T-cell (primary cell): ENCODE measurements at regions of chr4 and their contacts with region 1.

Region 1: GRCh38 chr4:184721254-184721653 is 12.6 kb downstream of the CENPU start:
- DNase-seq: no peak
- ATAC-seq: no peak
- H3K4me3 ChIP-seq: no peak overlapping the region
- H3K4me3 Mint-ChIP-seq: no peak overlapping the region
- H3K27ac ChIP-seq: no peak overlapping the region
- H3K27ac Mint-ChIP-seq: no peak overlapping the region
- H3K4me1 ChIP-seq: no peaks in the 10 kb centered on the region
- H3K4me1 Mint-ChIP-seq: peaks cover 0 to 2% (median 0%) of the 10 kb centered on the region in 3 donors
- H3K27me3 ChIP-seq: no peaks in the 10 kb centered on the region
- H3K27me3 Mint-ChIP-seq: no peaks in the 10 kb centered on the region

Region 2: DNA sequence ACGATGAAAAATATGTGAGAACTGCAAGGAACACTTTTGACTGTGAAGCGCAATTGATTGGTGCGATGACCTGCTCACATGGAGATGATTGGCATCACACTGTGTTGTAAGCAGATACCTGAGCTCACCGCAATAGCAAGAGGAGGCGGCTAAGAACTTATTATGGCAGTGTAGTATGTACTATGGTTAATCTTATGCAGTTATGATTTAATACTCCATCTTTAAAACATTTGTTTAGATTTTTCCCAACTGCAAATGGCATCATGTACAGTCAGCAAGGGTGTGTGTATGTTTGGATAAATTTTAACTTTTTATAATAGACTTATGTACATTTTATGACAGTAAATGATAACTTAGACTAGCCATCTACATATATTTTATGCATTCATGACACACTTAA is 46.2 kb before region 1 on chr4:
- CTCF ChIA-PET with region 1: no interaction called
- POLR2A ChIA-PET with region 1: interaction called in 1 of 2 experiments, 10 read pairs
- DNase-seq: no peak
- ATAC-seq: no peak
- H3K4me3 ChIP-seq: no peak overlapping the region
- H3K4me3 Mint-ChIP-seq: no peak overlapping the region
- H3K27ac ChIP-seq: no peak overlapping the region
- H3K27ac Mint-ChIP-seq: no peak overlapping the region
- H3K4me1 ChIP-seq: no peaks in the 10 kb centered on the region
- H3K4me1 Mint-ChIP-seq: peaks cover 0 to 3% (median 2%) of the 10 kb centered on the region in 3 donors
- H3K27me3 ChIP-seq: no peaks in the 10 kb centered on the region
- H3K27me3 Mint-ChIP-seq: no peaks in the 10 kb centered on the region

Region 3: DNA sequence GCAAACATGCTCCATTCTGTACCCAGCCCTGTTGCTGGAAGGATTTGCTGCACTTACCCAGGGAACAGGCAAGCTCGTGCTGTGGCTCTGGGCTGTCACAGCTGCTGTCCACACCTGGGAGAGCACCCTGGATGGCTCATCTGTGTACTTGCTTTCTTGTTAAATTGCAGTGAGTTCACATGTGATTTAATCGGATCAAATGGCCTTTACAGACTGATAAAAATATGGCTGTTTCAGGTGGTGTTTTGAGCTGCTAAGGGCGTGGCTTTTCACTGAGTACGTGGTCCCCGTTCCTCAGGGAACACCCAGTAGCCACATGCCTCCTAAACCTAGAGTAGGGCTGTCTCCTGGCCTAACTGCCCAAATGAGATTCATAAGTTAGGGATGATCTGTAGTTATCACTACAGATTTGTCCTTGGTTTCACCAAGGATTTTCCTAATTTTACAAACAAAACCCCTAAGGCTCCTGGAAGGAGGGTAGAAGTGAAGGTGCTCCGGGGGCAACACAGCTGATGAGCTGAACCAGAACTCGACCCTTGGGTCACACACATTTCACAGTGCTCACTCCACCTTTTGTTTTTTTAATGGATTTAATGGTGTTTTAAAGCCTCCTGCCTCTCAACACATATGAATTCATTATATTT is 1519.7 kb after region 1 on chr4:
- CTCF ChIA-PET with region 1: no interaction called
- POLR2A ChIA-PET with region 1: no interaction called
- DNase-seq: no peak
- ATAC-seq: no peak
- H3K4me3 ChIP-seq: no peak overlapping the region
- H3K4me3 Mint-ChIP-seq: no peak overlapping the region
- H3K27ac ChIP-seq: no peak overlapping the region
- H3K27ac Mint-ChIP-seq: no peak overlapping the region
- H3K4me1 ChIP-seq: no peaks in the 10 kb centered on the region
- H3K4me1 Mint-ChIP-seq: no peaks in the 10 kb centered on the region
- H3K27me3 ChIP-seq: no peaks in the 10 kb centered on the region
- H3K27me3 Mint-ChIP-seq: no peaks in the 10 kb centered on the region